Spleen (tissue), 13 donors: ENCODE measurements at regions of chr11 and their contacts with region 1.

Region 1: GRCh38 chr11:18105802-18106574 is at the start of gene SAAL1:
- DNase-seq: peak; percentile 97
- H3K4me3 ChIP-seq: peak within 1 kb of the TSS; percentile 65 to 92 (median 84)
- H3K27ac ChIP-seq: peak within 1 kb of the TSS in 6 of 8 donors; percentile 41 to 83 (median 78)
- H3K4me1 ChIP-seq: peaks cover 7 to 43% (median 21%) of the 10 kb centered on the region in 6 donors
- H3K27me3 ChIP-seq: peaks cover 0 to 4% (median 0%) of the 10 kb centered on the region in 7 donors
- CTCF ChIP-seq: peak; percentile 40 to 87 (median 75)
- POLR2A ChIP-seq: no peak
- total RNA-seq, gene SAAL1: 13.4 to 26.9 (median 15.5) TPM

Region 2: DNA sequence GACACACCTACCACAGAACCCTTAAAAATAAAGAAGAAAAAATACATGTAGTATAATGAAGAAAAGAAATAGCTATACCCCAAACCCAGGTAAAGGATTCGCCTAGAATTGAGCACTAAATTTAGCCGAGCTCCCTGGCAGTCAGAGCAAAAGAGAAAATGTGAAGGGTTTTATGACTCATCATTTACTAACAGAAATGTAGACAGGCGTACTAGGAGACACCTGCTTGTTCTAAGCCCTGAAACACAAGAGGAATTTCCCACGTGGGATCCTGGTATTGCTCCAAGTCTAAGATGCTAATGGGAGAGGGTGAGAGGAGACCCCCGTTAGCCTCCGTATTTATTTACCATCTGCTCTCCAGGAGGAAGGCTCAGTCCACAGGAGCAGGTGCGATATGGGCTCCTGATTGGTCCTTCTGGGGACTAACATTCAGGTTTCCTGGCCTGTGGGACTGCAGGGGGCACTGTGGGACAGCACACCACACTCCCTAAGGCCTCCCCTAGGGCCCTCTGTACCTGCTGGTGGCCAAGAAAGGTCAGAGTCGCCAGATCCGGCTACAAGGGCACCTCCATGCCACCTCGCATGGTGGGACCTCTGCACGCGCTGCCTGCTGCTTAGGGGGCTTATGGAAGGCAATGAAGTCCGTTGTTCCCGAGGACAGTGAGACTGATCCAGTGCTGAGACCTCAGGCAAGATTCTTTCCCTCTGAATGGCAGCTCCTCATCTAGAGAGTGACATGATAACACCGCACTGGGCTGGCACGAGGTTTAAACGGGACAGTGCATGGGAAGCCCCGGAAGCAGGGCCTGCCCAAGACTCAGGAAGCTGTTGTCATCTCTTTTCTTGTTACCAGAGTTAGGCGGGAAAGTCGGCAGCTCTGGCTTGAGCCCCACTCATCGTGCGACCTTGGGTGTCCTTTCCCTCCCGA is 345.6 kb before region 1 on chr11:
- intact Hi-C with region 1: no loop called
- DNase-seq: no peak
- H3K4me3 ChIP-seq: no peak overlapping the region
- H3K27ac ChIP-seq: no peak overlapping the region
- H3K4me1 ChIP-seq: no peaks in the 10 kb centered on the region
- H3K27me3 ChIP-seq: no peaks in the 10 kb centered on the region
- CTCF ChIP-seq: peak in 9 of 11 experiments; percentile 19 to 63 (median 54)
- POLR2A ChIP-seq: no peak

Region 3: DNA sequence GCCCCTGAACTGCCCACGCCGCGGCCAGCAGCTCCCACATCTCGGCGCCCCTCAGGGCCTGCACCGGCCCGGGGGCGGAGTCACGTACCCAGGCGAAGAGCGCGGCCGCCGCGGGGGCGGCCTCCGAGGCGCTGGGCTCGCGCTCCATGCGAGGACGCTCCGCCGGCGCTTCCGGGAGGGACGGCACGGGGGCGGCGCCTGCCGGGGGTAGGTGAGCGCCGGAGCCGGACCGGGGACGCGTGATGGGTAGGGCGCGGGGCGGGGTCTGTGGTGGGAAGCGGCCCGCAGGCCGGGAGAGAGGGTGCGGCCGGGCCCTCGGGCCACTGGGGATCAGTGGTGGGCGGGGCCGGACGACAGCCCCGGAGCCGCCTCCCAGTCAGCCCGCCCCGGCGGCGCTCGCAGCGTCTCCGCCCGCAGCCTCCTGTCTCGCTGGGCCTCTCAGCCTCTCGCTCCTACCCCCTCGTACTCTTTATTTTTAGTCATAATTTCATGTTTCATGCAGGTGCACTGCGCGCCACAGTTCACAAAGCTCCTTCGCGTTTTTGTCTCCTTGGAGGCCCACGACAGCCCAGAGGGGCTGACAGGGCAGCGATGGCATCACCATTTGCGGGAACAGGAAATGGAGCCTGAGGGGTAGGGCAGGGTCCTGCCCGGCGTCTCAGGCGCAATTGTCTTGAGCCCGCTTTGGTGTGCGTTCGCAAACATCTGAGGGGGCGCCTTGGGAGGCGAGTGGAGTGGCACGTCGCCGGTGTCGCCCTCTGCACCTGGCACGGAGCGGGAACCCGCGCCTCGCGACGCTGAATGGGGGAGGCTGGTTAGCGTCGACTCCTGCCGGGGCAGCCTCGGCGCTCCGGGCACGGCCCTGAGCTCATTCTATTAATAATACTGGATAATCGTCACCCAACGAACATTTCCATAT is 92.9 kb before region 1 on chr11 and contains the start of gene SERGEF:
- intact Hi-C with region 1: loop called (anchors 5 kb)
- DNase-seq: peak; percentile 99
- H3K4me3 ChIP-seq: peak within 1 kb of the TSS; percentile 51 to 93 (median 82)
- H3K27ac ChIP-seq: peak within 1 kb of the TSS; percentile 75 to 92 (median 88)
- H3K4me1 ChIP-seq: peaks cover 0 to 26% (median 16%) of the 10 kb centered on the region in 6 donors
- H3K27me3 ChIP-seq: no peaks in the 10 kb centered on the region
- CTCF ChIP-seq: peak in 5 of 11 experiments; percentile 40 to 61 (median 48)
- POLR2A ChIP-seq: peak in 2 of 3 donors; percentile 64 to 81
- total RNA-seq, gene SERGEF: 29.0 to 43.9 (median 35.9) TPM